ENCODE measurements at regions of chr9 and their contacts with region 1.

Region 1: GRCh38 chr9:109320742-109321448 is at the start of gene EPB41L4B:
- DNase-seq: peak; percentile 69
- ATAC-seq: peak; percentile 95
- H3K4me3 ChIP-seq: peak within 1 kb of the TSS; percentile 45
- H3K27ac ChIP-seq: no peak within 1 kb of the TSS
- H3K4me1 ChIP-seq: peaks cover 2% of the 10 kb centered on the region
- H3K27me3 ChIP-seq: peaks cover 51% of the 10 kb centered on the region
- CTCF ChIP-seq: peak; percentile 93
- POLR2A ChIP-seq: peak; percentile 44; the same call in 1 of the 2 replicates
- RAD21 ChIP-seq: peak; percentile 89
- total RNA-seq, gene EPB41L4B: 0.54 and 0.56 TPM in 2 replicates

Region 2: DNA sequence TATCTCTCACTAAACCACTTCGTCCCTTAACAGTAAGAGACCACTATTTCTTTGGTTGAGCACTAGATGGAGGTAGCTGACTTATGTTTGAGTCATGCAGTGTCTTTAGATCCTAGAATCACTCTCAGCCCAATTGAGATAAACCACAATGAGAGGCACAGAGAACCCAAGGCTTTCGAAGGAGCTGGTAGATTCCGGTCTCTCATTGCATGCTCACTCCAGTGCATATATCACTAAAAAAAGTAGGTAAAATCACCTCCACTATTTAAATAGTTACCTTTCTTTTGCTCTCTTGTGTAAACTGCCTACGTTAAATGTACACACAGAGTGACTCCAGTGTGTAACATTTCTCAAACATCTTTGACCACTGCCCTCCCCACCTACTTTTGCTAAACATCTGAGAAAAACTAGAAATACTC is 431.2 kb before region 1 on chr9:
- CTCF ChIA-PET with region 1: no interaction called
- POLR2A ChIA-PET with region 1: no interaction called
- dilution Hi-C with region 1: no loop called
- in situ Hi-C with region 1: loop called (anchors 10 kb)
- intact Hi-C with region 1: no loop called
- DNase-seq: peak; percentile 67
- ATAC-seq: peak; percentile 82
- H3K4me3 ChIP-seq: no peak overlapping the region
- H3K27ac ChIP-seq: no peak overlapping the region
- H3K4me1 ChIP-seq: peaks cover 2% of the 10 kb centered on the region; the same call in 1 of the 2 replicates
- H3K27me3 ChIP-seq: no peaks in the 10 kb centered on the region
- CTCF ChIP-seq: peak; percentile 44
- POLR2A ChIP-seq: no peak
- RAD21 ChIP-seq: peak; percentile 59

Region 3: GRCh38 chr9:109012876-109013678 is 307.8 kb before region 1 on chr9 and contains the start of gene CTNNAL1:
- CTCF ChIA-PET with region 1: no interaction called
- POLR2A ChIA-PET with region 1: no interaction called
- dilution Hi-C with region 1: no loop called
- in situ Hi-C with region 1: no loop called
- intact Hi-C with region 1: loop called (anchors 5 kb)
- DNase-seq: peak; percentile 81
- ATAC-seq: peak; percentile 89
- H3K4me3 ChIP-seq: peak within 1 kb of the TSS; percentile 71
- H3K27ac ChIP-seq: peak within 1 kb of the TSS; percentile 84
- H3K4me1 ChIP-seq: peaks cover 15% of the 10 kb centered on the region
- H3K27me3 ChIP-seq: no peaks in the 10 kb centered on the region
- CTCF ChIP-seq: no peak
- POLR2A ChIP-seq: peak; percentile 92
- RAD21 ChIP-seq: no peak
- total RNA-seq, gene CTNNAL1: 131 and 186 TPM in 2 replicates

Region 4: DNA sequence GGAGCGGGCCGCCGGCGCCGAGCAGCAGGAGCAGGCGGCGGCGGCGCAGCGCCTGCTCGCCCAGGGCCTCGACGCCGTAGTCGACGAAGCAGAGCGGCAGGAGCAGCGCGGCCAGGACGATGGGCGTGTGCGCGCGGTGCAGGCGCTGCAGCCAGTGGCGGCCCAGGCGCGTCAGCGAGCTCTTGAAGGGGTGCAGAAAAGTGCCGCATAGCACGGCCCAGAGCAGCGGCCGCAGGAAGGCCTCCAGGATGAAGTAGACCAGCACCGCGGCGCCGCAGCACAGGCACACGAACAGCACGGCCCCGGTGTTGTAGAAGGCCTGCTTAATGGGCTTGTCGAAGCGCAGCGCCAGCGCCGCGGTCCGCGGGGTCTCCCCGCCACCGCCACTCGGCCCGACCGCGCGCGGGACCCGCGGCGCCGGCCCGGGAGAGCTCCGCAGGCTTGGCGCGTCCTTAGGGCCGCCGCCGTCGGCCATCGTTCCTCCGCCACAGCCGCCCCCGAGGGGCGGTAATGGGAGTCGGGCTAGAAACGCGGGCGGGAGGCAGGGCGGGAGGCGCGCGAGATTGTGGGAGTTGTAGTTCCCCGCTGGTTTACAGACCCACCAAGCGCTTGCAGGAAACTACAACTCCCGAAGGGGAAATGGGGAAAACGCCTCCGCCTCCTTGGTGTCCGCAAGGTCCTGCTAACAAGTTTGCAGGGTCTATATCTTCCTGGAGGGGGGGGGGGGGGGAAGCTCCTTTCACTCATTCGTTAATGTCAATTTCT is 201.3 kb before region 1 on chr9 and contains the start of gene TMEM245:
- CTCF ChIA-PET with region 1: no interaction called
- POLR2A ChIA-PET with region 1: no interaction called
- dilution Hi-C with region 1: no loop called
- in situ Hi-C with region 1: no loop called
- intact Hi-C with region 1: loop called (anchors 10 kb)
- DNase-seq: peak; percentile 100
- ATAC-seq: peak; percentile 96
- H3K4me3 ChIP-seq: peak within 1 kb of the TSS; percentile 84
- H3K27ac ChIP-seq: peak within 1 kb of the TSS; percentile 74
- H3K4me1 ChIP-seq: peaks cover 3% of the 10 kb centered on the region
- H3K27me3 ChIP-seq: no peaks in the 10 kb centered on the region
- CTCF ChIP-seq: no peak
- POLR2A ChIP-seq: peak; percentile 60; the same call in 1 of the 2 replicates
- RAD21 ChIP-seq: no peak
- total RNA-seq, gene TMEM245: 51.7 and 57.9 TPM in 2 replicates

Region 5: DNA sequence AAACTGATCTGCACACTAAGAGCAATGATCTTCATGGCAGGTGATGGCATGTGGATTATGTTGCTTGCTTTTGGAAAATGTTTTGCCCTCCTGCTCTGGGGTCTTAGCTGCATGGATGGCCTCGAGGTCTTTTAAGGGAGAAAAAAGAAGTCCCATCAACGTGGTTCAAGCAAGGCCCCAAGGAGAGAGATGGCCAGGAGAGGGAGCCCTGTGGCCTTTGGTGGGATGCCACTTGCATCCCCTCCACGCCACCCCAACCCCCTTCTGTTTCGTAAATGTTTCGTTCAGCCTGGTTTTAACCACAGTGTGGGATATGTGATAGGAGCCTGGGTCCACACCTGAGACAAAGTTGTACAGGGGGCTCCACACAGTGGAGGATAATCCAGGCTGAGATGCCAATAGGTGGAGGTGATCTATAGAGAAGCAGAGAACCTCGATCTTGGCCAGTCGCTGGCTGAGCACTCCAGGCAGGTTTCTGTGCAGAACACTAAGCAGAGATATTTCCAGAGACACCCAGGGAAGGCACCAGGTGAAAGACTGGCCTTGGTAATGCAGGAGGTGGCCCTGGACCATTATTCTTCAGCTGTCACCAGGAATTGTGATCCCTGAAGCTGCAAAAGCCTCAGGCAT is 128.0 kb before region 1 on chr9:
- CTCF ChIA-PET with region 1: no interaction called
- POLR2A ChIA-PET with region 1: no interaction called
- dilution Hi-C with region 1: no loop called
- in situ Hi-C with region 1: loop called (anchors 25 kb)
- intact Hi-C with region 1: loop called (anchors 1 kb)
- DNase-seq: peak; percentile 7
- ATAC-seq: peak; percentile 53
- H3K4me3 ChIP-seq: no peak overlapping the region
- H3K27ac ChIP-seq: no peak overlapping the region
- H3K4me1 ChIP-seq: peaks cover 2% of the 10 kb centered on the region; the same call in 1 of the 2 replicates
- H3K27me3 ChIP-seq: peaks cover 20% of the 10 kb centered on the region
- CTCF ChIP-seq: peak; percentile 39
- POLR2A ChIP-seq: no peak
- RAD21 ChIP-seq: peak; percentile 47; the same call in 1 of the 2 replicates

Measured in IMR-90 (cell line).